ENCODE measurements at regions of chr20 and their contacts with region 1.

Region 1: GRCh38 chr20:32585011-32585518 is at the start of gene NOL4L:
- DNase-seq: no peak
- ATAC-seq: peak; percentile 7
- H3K4me3 ChIP-seq: peak within 1 kb of the TSS; percentile 76; the same call in 1 of the 2 replicates
- H3K27ac ChIP-seq: no peak within 1 kb of the TSS
- H3K4me1 ChIP-seq: peaks cover 17% of the 10 kb centered on the region
- H3K27me3 ChIP-seq: peaks cover 0 to 2% of the 10 kb centered on the region in 2 experiments; a peak in 1 of 4 replicates
- CTCF ChIP-seq: no peak
- EP300 ChIP-seq: no peak
- POLR2A ChIP-seq: 0 out of 2 replicates have a peak, but pooled peaks have one; percentile 2
- RAD21 ChIP-seq: no peak
- polyA plus RNA-seq, gene NOL4L: 2.3 to 3.9 TPM

Region 2: DNA sequence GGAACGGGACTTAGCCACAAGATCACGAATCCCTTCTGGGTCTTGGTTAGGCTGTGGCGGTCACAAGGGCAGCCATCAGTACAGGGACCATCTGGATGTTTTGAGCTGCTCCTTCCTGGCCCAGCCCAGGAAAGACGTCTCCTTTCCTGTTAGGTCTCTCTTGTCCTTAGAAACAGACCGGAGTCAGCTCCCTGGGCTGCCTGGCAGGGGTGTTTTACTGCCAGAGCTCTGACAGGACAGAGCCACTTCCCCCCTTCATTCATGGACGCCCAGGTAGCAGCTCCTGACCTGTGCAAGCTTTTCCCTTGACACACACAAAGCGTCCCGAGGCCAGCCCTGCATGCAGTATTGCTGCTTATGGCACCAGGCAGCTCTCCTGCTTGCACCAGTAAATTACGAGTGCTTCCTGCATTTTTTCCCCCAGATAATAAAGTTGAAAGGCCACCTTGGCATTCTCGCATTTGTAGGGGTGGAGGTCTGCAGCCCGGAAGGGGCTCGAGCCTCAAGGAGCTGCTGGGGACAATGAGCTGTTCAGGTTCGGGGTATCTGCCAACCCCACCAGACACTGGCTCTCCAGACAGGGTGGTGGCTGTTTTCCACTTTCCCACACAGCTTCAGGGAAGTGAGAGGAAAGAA is 87.4 kb before region 1 on chr20:
- CTCF ChIA-PET with region 1: no interaction called
- POLR2A ChIA-PET with region 1: no interaction called
- RAD21 ChIA-PET with region 1: no interaction called
- SMC1A ChIA-PET with region 1: no interaction called
- in situ Hi-C with region 1: no loop called
- intact Hi-C with region 1: no loop called
- DNase-seq: no peak
- ATAC-seq: no peak
- H3K4me3 ChIP-seq: no peak overlapping the region
- H3K27ac ChIP-seq: no peak overlapping the region
- H3K4me1 ChIP-seq: no peaks in the 10 kb centered on the region
- H3K27me3 ChIP-seq: no peaks in the 10 kb centered on the region
- CTCF ChIP-seq: no peak
- EP300 ChIP-seq: no peak
- POLR2A ChIP-seq: no peak
- RAD21 ChIP-seq: no peak

Region 3: GRCh38 chr20:32535953-32536823 is 48.9 kb before region 1 on chr20:
- CTCF ChIA-PET with region 1: interaction called, 4 read pairs
- POLR2A ChIA-PET with region 1: no interaction called
- RAD21 ChIA-PET with region 1: interaction called, 4 read pairs
- SMC1A ChIA-PET with region 1: interaction called, 9 read pairs
- in situ Hi-C with region 1: no loop called
- intact Hi-C with region 1: loop called (anchors 2 kb)
- DNase-seq: no peak
- ATAC-seq: peak; percentile 76
- H3K4me3 ChIP-seq: peak overlapping the region; percentile 61
- H3K27ac ChIP-seq: peak overlapping the region; percentile 64
- H3K4me1 ChIP-seq: peaks cover 46% of the 10 kb centered on the region
- H3K27me3 ChIP-seq: no peaks in the 10 kb centered on the region
- CTCF ChIP-seq: no peak
- EP300 ChIP-seq: no peak
- POLR2A ChIP-seq: peak; percentile 45; the same call in 1 of the 2 replicates
- RAD21 ChIP-seq: no peak